Activated CD4-positive, alpha-beta T cell treated with anti-CD3 and anti-CD28 coated beads for 36 hours (primary cell): ENCODE measurements at regions of chr20 and their contacts with region 1.

Region 1: DNA sequence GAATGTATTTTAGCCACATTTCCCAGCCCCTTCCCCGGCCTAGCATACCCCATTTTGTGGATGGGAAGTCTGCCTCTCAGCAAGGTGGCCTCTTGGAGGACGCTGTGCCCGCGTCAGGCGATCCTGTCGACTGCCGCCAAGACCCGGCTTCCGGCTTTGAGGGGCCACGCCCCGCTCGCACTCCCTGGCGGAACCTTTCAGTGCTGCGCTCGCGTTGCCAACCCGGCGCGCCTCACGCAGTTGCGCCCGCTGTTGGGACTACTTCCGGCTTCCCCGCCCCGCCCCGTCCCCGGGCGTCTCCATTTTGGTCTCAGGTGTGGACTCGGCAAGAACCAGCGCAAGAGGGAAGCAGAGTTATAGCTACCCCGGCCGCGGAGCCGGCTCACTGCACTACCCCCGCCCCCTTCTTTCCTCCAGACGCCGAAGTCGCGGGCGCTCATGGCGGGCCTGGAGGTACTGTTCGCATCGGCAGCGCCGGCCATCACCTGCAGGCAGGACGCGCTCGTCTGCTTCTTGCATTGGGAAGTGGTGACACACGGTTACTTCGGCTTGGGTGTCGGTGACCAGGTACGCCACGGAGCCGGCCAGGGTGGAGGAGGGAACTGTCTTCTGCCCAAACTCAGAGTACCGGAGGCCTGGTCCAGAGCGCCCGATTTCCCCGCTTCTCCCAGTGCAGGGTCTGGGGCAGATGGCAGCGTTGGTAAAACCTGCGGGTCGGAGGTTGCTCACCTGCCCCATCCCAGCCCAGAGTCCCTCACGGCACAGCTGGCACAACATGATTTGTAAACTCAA is at the start of gene PSMF1:
- DNase-seq: peak; percentile 97
- ATAC-seq: peak; percentile 97
- H3K4me3 Mint-ChIP-seq: peak within 1 kb of the TSS; percentile 94
- H3K27ac Mint-ChIP-seq: peak within 1 kb of the TSS; percentile 93
- H3K4me1 Mint-ChIP-seq: peaks cover 49% of the 10 kb centered on the region
- H3K27me3 Mint-ChIP-seq: no peaks in the 10 kb centered on the region
- total RNA-seq, gene PSMF1: 143 to 178 TPM

Region 2: DNA sequence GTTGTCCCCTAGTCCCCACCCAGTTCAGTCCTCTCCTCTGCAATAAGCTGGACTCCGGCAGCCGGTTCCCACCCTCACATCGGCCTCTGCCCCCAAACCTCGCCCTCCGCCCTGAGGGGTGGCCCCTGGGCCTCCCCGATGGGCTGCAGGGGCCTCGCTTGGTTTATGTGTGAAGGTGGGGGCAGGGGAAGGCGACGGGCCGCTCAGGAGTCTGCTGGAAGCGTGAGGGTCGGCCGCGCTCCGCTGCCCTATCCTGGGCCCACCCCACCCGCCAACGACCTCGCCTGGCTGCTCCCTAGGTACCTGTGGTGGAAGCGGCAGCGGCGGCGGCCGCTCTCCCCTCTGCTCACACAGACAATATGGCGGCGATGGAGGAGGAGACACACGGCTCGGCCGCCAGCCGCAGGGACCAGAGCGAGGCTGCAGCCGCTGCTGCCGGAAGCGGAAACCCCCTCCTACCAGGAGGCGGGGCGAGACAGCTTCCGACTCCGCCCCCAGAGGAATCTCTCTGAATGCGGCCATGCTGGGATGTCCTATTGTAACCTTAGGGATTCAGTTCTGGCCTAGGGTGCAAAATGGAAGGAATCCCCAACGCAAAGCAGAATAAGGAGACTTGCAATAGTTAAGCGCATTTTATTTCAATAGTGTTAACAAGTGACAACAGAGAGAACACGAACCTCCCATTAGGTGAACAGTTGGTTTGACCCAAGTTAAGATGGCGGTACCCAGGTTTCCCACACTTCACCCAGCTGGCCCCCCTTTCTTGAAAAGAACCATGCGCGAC is 575.0 kb before region 1 on chr20 and contains the start of gene CSNK2A1:
- CTCF ChIA-PET with region 1: no interaction called
- POLR2A ChIA-PET with region 1: no interaction called
- intact Hi-C with region 1: loop called in 1 of 2 experiments (anchors 5 kb)
- DNase-seq: peak; percentile 97
- ATAC-seq: peak; percentile 97
- H3K4me3 Mint-ChIP-seq: peak within 1 kb of the TSS; percentile 94
- H3K27ac Mint-ChIP-seq: peak within 1 kb of the TSS; percentile 96
- H3K4me1 Mint-ChIP-seq: peaks cover 49% of the 10 kb centered on the region
- H3K27me3 Mint-ChIP-seq: no peaks in the 10 kb centered on the region
- total RNA-seq, gene CSNK2A1: 179 to 254 TPM

Region 3: DNA sequence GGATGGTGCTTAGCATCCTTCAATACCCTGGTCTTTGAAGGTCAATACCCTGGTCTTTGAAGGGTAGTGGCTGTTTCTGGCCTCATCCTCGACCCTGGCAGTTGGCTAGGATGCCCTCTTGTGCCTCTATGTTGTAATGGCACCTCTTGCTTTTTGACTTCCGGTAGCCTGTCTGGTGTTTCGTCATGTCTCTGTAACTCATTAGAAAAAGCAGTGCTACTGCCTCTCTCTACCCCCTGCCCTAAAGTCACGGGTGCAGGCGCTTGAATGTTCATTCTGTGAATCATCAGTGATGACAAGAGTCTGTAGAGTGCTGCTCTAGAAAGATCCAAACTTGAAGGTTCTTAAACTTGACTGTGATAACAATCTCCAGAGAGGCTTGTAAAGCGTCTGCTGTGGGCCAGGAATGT is 144.7 kb before region 1 on chr20:
- CTCF ChIA-PET with region 1: no interaction called
- POLR2A ChIA-PET with region 1: no interaction called
- intact Hi-C with region 1: loop called in 1 of 2 experiments (anchors 1 kb)
- DNase-seq: peak; percentile 63
- ATAC-seq: peak; percentile 95
- H3K4me3 Mint-ChIP-seq: no peak overlapping the region
- H3K27ac Mint-ChIP-seq: peak overlapping the region; percentile 66
- H3K4me1 Mint-ChIP-seq: peaks cover 2% of the 10 kb centered on the region
- H3K27me3 Mint-ChIP-seq: no peaks in the 10 kb centered on the region

Region 4: GRCh38 chr20:1212607-1213396 is 94.3 kb after region 1 on chr20:
- CTCF ChIA-PET with region 1: no interaction called
- POLR2A ChIA-PET with region 1: no interaction called
- intact Hi-C with region 1: loop called (anchors 1 to 2 kb)
- DNase-seq: peak; percentile 86
- ATAC-seq: peak; percentile 66
- H3K4me3 Mint-ChIP-seq: no peak overlapping the region
- H3K27ac Mint-ChIP-seq: no peak overlapping the region
- H3K4me1 Mint-ChIP-seq: peaks cover 36% of the 10 kb centered on the region
- H3K27me3 Mint-ChIP-seq: peaks cover 3% of the 10 kb centered on the region

Region 5: DNA sequence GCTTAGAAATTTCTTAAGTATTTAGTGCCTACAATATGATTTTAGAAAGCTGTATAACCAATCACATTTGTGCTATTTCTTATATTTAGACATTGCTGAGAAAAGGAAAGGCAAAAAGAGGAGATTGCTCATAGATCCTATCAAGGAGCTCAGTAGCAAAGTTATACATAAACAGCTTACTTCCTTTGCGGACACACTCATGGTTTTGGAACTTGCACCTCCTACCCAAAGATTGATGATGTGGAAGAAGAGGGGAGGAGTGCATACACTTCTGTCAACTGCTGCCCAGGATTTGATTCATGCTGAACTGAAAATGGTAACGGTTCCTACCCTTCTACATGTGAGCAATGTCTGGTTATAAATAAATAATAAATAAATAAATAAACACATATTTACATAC is 124.0 kb after region 1 on chr20:
- CTCF ChIA-PET with region 1: no interaction called
- POLR2A ChIA-PET with region 1: no interaction called
- intact Hi-C with region 1: no loop called
- DNase-seq: no peak
- ATAC-seq: peak; percentile 81
- H3K4me3 Mint-ChIP-seq: no peak overlapping the region
- H3K27ac Mint-ChIP-seq: no peak overlapping the region
- H3K4me1 Mint-ChIP-seq: peaks cover 4% of the 10 kb centered on the region
- H3K27me3 Mint-ChIP-seq: peaks cover 4% of the 10 kb centered on the region

Region 6: GRCh38 chr20:1392823-1393506 is 274.4 kb after region 1 on chr20 and contains the start of gene FKBP1A:
- CTCF ChIA-PET with region 1: interaction called, 3 read pairs
- POLR2A ChIA-PET with region 1: no interaction called
- intact Hi-C with region 1: loop called (anchors 1 kb)
- DNase-seq: peak; percentile 95
- ATAC-seq: peak; percentile 82
- H3K4me3 Mint-ChIP-seq: peak within 1 kb of the TSS; percentile 93
- H3K27ac Mint-ChIP-seq: peak within 1 kb of the TSS; percentile 94
- H3K4me1 Mint-ChIP-seq: peaks cover 56% of the 10 kb centered on the region
- H3K27me3 Mint-ChIP-seq: no peaks in the 10 kb centered on the region
- total RNA-seq, gene FKBP1A: 265 to 316 TPM

Region 7: DNA sequence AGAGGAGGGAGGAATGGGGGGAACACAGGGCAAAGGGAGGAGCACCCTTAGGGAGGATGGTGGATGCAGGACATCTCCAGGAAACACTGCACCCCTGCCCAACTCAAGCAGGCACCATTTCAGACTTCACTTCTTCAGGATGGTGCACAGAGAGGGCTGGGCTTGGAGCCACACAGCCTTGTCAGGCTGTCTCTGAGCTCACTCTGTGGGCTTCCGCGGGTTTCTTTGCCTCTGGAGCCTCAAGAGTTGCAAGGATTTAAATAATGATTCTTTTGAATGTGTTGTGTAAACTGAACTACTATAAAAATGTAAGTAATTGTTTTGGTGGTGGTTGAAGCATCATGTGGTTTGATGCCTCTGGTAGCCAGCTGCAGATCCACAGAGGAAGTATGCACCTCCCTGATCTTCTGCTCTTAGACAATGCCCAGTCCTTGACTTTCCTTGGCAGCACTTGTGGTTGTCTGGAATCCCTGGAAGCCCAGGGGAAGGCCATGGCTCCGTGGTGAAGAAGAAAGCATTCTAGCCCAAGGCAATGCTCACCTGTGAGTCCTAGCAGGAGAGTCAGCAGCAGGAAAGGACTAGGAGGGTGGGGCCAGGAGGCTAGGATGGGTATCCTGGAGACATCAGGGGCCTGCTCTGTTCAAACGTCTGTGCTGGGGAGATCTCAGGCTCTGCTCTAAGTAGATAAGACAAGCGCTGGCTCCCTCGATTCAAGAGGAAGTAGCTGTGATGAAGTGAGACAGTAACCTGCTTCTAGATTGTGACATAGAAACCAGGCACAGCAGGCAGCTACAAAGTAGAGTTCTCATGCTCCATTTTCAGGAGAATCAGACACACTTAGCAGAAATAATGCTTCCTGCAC is 589.3 kb after region 1 on chr20:
- CTCF ChIA-PET with region 1: no interaction called
- POLR2A ChIA-PET with region 1: no interaction called
- intact Hi-C with region 1: no loop called
- DNase-seq: no peak
- ATAC-seq: peak; percentile 60
- H3K4me3 Mint-ChIP-seq: no peak overlapping the region
- H3K27ac Mint-ChIP-seq: peak overlapping the region; percentile 82
- H3K4me1 Mint-ChIP-seq: peaks cover 19% of the 10 kb centered on the region
- H3K27me3 Mint-ChIP-seq: no peaks in the 10 kb centered on the region